Activated naive CD8-positive, alpha-beta T cell treated with anti-CD3 and anti-CD28 coated beads, Interleukin-2, amount 10 ng/mL, durations not matched to agents 7 days and 5 days (primary cell): ENCODE measurements at regions of chr10 and their contacts with region 1.

Region 1: GRCh38 chr10:71771821-71772617 is 1.3 kb downstream of the VSIR start:
- DNase-seq: no peak
- ATAC-seq: no peak
- H3K4me3 Mint-ChIP-seq: peak overlapping the region; percentile 91
- H3K27ac Mint-ChIP-seq: peak overlapping the region; percentile 89
- H3K4me1 Mint-ChIP-seq: peaks cover 70% of the 10 kb centered on the region
- H3K27me3 Mint-ChIP-seq: no peaks in the 10 kb centered on the region

Region 2: GRCh38 chr10:71708301-71708703 is 63.7 kb before region 1 on chr10:
- POLR2A ChIA-PET with region 1: interaction called, 22 read pairs
- DNase-seq: peak; percentile 78
- ATAC-seq: peak; percentile 25
- H3K4me3 Mint-ChIP-seq: no peak overlapping the region
- H3K27ac Mint-ChIP-seq: peak overlapping the region; percentile 48
- H3K4me1 Mint-ChIP-seq: peaks cover 33% of the 10 kb centered on the region
- H3K27me3 Mint-ChIP-seq: no peaks in the 10 kb centered on the region

Region 3: DNA sequence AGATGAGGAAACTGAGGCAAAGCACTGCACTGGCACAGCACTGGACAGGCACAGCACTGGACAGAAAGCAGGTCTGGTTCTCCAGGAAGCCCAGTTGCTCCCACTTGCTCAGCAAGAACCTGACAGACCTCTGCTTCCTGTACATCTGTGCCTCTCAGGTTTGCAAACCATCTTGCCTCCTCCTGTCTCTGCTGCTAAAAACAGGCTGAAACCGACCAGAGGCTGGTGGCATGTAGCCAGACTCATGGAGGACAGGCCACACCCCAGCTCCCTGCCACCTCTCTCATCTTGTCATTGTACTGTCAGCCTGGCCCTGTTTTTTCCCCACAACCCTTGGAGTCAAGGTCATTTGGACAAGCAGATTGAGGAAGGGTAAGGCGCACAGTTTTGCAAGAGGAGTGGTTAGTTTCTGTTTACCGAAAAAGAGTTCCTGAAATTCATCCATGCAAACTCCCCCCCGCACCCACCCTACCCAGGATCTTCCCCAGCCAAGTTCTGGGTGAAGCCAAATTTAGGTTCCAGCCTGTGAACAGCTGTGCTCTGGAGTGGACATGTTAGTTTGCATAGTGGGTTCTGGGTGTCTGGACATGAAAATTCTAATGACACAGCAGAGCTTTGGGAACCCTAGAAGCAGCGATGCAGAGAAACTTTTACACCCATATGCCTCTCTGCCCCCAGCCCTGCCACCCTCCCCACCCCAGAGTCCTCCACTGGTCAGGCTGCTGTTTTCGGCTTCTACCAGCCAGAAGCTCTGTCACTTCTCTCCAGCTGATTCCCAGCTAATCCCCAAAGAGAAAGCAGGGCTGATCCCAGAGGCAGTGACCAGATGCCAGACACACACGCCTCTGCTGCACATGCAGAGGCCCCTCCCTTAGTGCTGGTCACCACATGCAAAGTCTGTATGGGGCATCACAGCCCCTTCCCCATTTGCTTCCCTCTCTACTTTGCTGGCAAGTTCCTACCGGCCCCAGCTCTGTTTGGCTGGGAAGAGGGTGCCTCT is 44.0 kb before region 1 on chr10:
- POLR2A ChIA-PET with region 1: interaction called, 138 read pairs
- DNase-seq: no peak
- ATAC-seq: peak; percentile 53
- H3K4me3 Mint-ChIP-seq: peak overlapping the region; percentile 65
- H3K27ac Mint-ChIP-seq: peak overlapping the region; percentile 97
- H3K4me1 Mint-ChIP-seq: peaks cover 73% of the 10 kb centered on the region
- H3K27me3 Mint-ChIP-seq: no peaks in the 10 kb centered on the region

Region 4: DNA sequence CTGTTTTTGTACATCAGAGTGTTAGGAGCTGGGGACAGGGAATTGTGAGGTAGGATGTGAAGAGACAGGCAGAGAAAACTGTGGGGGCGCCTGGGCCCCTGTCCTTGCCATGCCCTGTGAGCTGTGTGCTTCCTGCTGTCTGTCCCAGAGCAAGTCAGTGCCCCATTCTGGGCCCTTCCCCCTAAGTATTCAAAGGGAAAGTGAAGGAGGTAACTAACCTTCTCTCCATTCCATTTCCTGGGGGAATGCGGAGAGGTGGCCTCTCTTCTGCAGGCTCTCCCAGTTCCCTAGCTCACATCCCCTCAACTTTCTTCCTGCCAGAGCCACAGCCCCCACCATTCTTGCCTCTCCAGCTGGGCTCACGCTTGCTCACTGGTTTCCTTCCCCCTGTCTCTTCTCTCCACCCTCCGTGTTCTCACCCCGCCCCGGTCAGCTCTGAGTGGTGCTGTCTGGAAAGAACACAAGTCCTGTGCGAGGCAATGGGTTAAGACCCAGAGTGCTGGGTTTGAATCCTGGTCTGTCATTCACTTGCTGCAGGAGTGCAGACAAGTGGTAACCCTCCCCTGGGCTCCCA is 11.0 kb after region 1 on chr10:
- POLR2A ChIA-PET with region 1: interaction called, 12 read pairs
- DNase-seq: no peak
- ATAC-seq: no peak
- H3K4me3 Mint-ChIP-seq: no peak overlapping the region
- H3K27ac Mint-ChIP-seq: peak overlapping the region; percentile 13
- H3K4me1 Mint-ChIP-seq: peaks cover 31% of the 10 kb centered on the region
- H3K27me3 Mint-ChIP-seq: peaks cover 3% of the 10 kb centered on the region

Region 5: DNA sequence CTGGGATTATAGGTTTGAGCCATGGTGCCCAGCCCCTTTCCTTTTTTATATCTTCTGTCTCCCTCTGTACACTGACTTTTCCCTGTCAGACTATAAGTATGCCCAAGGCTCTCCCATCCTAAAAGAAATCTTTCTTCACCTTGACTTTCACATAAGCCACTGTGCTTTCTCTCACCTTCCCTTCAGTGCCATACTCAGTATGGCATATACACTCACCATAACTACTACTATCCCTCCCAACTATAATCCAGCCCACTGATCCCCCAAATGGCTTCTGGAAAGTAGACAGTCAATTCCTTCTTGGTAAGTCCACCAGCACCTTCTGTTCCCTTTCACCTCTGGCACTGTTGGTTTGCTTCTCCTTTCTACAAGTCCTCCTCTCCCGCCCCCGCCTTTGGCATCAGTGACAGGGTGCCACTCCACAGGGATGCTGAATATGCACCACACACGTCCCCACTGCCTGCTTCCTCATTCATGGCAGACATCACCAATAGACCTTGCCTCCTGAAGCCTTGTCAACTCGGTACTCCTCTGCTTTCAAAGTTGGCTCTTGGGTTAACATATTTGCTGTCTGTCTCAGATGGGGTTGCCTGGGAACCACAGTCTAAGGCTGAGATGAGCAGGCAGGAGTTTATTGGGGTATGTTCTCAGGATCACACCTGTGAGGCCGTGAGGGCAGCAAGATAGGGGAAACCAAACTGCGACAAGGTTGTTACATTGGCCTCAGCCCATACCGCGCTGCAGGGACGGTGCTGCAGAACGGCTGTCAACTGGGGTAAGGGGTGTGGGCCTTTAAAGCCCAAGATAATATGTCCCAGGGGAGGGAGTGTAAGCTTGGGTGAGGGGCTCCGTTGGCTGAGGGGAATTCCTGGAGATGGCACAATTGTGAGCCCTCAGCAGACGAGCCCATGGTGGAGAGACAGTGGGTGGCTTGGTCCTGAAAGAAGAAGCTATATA is 86.2 kb after region 1 on chr10:
- POLR2A ChIA-PET with region 1: no interaction called
- DNase-seq: no peak
- ATAC-seq: no peak
- H3K4me3 Mint-ChIP-seq: no peak overlapping the region
- H3K27ac Mint-ChIP-seq: no peak overlapping the region
- H3K4me1 Mint-ChIP-seq: peaks cover 5% of the 10 kb centered on the region
- H3K27me3 Mint-ChIP-seq: peaks cover 5% of the 10 kb centered on the region